ENCODE measurements at regions of chr4 and their contacts with region 1.

Region 1: DNA sequence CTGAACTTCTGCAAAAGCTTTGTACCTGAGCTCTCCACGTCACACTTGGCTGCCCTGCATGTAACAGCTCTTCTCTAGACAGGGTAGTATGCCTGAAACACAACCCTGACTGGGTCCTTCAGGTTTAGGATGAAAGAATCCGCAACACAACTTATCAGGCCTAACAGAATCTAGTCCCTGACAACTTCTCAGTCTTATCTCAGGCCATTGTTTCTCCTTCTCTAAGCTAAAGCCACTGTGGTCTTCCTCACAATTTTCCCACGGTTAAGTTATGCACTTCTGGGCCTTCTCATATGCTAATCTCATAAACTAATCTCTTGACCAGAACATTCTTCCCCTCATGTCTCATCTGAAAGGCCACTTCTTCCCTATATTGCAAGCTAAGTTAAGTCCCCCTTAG is 10.8 kb upstream of the TMPRSS11B start:
- DNase-seq: no peak
- H3K4me3 ChIP-seq: no peak overlapping the region
- H3K27ac ChIP-seq: no peak overlapping the region
- H3K4me1 ChIP-seq: no peaks in the 10 kb centered on the region
- H3K27me3 ChIP-seq: no peaks in the 10 kb centered on the region; a peak in 1 of 7 replicates
- CTCF ChIP-seq: no peak
- EP300 ChIP-seq: no peak
- POLR2A ChIP-seq: no peak
- RAD21 ChIP-seq: no peak

Region 2: DNA sequence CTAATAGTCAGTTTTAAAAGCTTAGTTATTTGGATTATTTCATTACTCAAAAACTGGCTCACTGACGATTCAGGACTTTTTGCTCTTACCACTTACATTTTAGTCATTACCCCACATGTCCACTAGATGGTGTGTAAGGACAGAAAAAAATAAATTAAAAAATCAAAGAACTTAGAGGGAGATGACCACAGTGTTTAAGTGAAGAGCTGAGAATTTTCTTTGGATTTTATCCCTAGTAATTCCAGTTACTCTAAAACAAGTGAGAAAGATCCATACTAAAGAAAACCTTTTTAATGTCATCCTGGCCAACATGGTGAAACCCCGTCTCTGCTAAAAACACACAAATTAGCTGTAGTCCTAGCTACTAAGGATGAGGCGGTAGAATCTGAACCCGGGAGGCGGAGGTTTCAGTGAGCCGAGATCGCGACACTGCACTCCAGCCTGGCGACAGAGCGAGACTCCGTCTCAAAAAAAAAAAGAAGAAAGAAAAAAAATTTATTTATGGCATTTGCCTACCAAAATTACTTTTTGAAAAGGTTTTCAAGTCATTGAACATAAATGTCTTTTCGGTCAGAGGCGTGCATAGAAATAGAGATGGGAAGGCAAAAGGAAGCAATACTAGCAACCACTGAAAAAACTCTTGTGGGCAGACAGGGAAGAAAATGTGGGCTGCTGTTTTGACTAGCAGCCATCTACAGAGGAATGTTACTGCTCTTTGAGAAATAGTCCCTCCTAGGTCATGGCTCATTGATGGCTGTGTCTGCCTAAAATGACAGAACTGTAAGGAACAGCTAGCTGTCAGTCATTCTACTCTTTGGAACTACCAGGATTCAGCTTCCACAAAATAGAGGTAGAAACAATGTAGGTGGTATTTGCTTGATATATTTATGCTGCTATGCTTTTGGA is 15.8 kb after region 1 on chr4:
- CTCF ChIA-PET with region 1: interaction called, 13 read pairs
- POLR2A ChIA-PET with region 1: no interaction called
- DNase-seq: no peak
- H3K4me3 ChIP-seq: peak overlapping the region in 2 of 4 experiments; percentile 8 to 48; a peak in 4 of 8 replicates
- H3K27ac ChIP-seq: peak overlapping the region; percentile 7; the same call in 1 of the 2 replicates
- H3K4me1 ChIP-seq: peaks cover 2 to 15% (median 8%) of the 10 kb centered on the region in 4 experiments; a peak in 4 of 7 replicates
- H3K27me3 ChIP-seq: no peaks in the 10 kb centered on the region
- CTCF ChIP-seq: peak in 2 of 3 experiments; percentile 38 to 46; a peak in 2 of 4 replicates
- EP300 ChIP-seq: no peak
- POLR2A ChIP-seq: no peak
- RAD21 ChIP-seq: peak; percentile 66 to 71

Region 3: GRCh38 chr4:68283714-68284113 is 27.4 kb after region 1 on chr4:
- CTCF ChIA-PET with region 1: no interaction called
- POLR2A ChIA-PET with region 1: no interaction called
- DNase-seq: no peak
- H3K4me3 ChIP-seq: no peak overlapping the region
- H3K27ac ChIP-seq: no peak overlapping the region
- H3K4me1 ChIP-seq: peaks cover 0 to 2% (median 0%) of the 10 kb centered on the region in 4 experiments; a peak in 1 of 7 replicates
- H3K27me3 ChIP-seq: no peaks in the 10 kb centered on the region
- CTCF ChIP-seq: no peak
- EP300 ChIP-seq: no peak
- POLR2A ChIP-seq: no peak
- RAD21 ChIP-seq: no peak

Region 4: GRCh38 chr4:68324519-68325262 is 68.4 kb after region 1 on chr4:
- CTCF ChIA-PET with region 1: no interaction called
- POLR2A ChIA-PET with region 1: no interaction called
- DNase-seq: no peak
- H3K4me3 ChIP-seq: no peak overlapping the region
- H3K27ac ChIP-seq: no peak overlapping the region
- H3K4me1 ChIP-seq: no peaks in the 10 kb centered on the region
- H3K27me3 ChIP-seq: no peaks in the 10 kb centered on the region
- CTCF ChIP-seq: no peak
- EP300 ChIP-seq: no peak
- POLR2A ChIP-seq: no peak
- RAD21 ChIP-seq: no peak

Region 5: DNA sequence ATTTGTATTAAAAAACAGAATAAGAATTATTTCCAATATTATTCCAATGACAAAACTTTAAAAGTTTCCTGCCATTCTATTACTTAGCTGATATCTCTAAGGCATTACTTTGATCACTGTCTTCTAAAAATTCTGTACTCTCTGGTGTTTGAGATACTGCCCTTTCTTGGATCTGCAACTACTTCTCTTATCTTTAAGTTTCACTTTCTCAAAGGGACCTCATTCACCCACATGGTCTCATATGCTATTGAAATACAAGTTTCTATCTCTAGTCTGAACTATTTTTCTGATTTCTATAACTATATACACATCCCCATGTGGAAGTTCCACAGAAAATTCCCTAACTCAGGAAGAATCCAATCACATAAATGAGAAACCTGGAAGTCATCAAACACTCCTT is 213.2 kb after region 1 on chr4:
- CTCF ChIA-PET with region 1: no interaction called
- POLR2A ChIA-PET with region 1: no interaction called
- DNase-seq: no peak
- H3K4me3 ChIP-seq: no peak overlapping the region
- H3K27ac ChIP-seq: no peak overlapping the region
- H3K4me1 ChIP-seq: no peaks in the 10 kb centered on the region; a peak in 1 of 7 replicates
- H3K27me3 ChIP-seq: no peaks in the 10 kb centered on the region
- CTCF ChIP-seq: no peak
- EP300 ChIP-seq: no peak
- POLR2A ChIP-seq: no peak
- RAD21 ChIP-seq: no peak